Left ventricle myocardium superior (tissue), 1 donor: ENCODE measurements at regions of chr10 and their contacts with region 1.

Region 1: GRCh38 chr10:50417886-50418830 is 166.8 kb upstream of the ASAH2 start:
- DNase-seq: peak; percentile 86
- ATAC-seq: peak; percentile 93

Region 2: GRCh38 chr10:50291261-50291850 is 126.8 kb before region 1 on chr10:
- intact Hi-C with region 1: loop called (anchors 10 kb)
- DNase-seq: no peak
- ATAC-seq: peak; percentile 43

Region 3: GRCh38 chr10:50593523-50594376 is 175.6 kb after region 1 on chr10:
- intact Hi-C with region 1: no loop called
- DNase-seq: no peak
- ATAC-seq: peak; percentile 80

Region 4: GRCh38 chr10:50624866-50625692 is 206.9 kb after region 1 on chr10:
- intact Hi-C with region 1: loop called (anchors 10 kb)
- DNase-seq: peak; percentile 92
- ATAC-seq: peak; percentile 76